Heart left ventricle (tissue), 16 donors: ENCODE measurements at regions of chr1 and their contacts with region 1.

Region 1: GRCh38 chr1:9449106-9449627 is 90.1 kb upstream of the SLC25A33 start:
- DNase-seq: peak in 4 of 5 donors; percentile 39 to 65 (median 52)
- ATAC-seq: peak; percentile 87 to 92 (median 90)
- H3K4me3 ChIP-seq: peak overlapping the region in 3 of 12 donors; percentile 3 to 10 (median 7)
- H3K27ac ChIP-seq: peak overlapping the region in 9 of 12 donors; percentile 13 to 71 (median 49)
- H3K4me1 ChIP-seq: peaks cover 0 to 26% (median 18%) of the 10 kb centered on the region in 12 donors
- H3K27me3 ChIP-seq: peaks cover 0 to 5% (median 0%) of the 10 kb centered on the region in 9 donors
- CTCF ChIP-seq: no peak
- POLR2A ChIP-seq: no peak

Region 2: GRCh38 chr1:9388335-9389180 is 60.6 kb before region 1 on chr1:
- intact Hi-C with region 1: loop called in 3 of 10 experiments (anchors 2 to 10 kb)
- DNase-seq: no peak
- ATAC-seq: peak in 1 of 4 donors; percentile 25
- H3K4me3 ChIP-seq: no peak overlapping the region
- H3K27ac ChIP-seq: peak overlapping the region in 1 of 12 donors; percentile 11
- H3K4me1 ChIP-seq: peaks cover 0 to 32% (median 19%) of the 10 kb centered on the region in 12 donors
- H3K27me3 ChIP-seq: no peaks in the 10 kb centered on the region
- CTCF ChIP-seq: no peak
- POLR2A ChIP-seq: no peak

Region 3: GRCh38 chr1:9413148-9413876 is 35.9 kb before region 1 on chr1:
- intact Hi-C with region 1: loop called in 1 of 10 experiments (anchors 5 kb)
- DNase-seq: peak; percentile 56 to 80 (median 74)
- ATAC-seq: peak; percentile 50 to 91 (median 88)
- H3K4me3 ChIP-seq: peak overlapping the region in 1 of 12 donors; percentile 24
- H3K27ac ChIP-seq: peak overlapping the region; percentile 66 to 94 (median 85)
- H3K4me1 ChIP-seq: peaks cover 6 to 30% (median 21%) of the 10 kb centered on the region in 12 donors
- H3K27me3 ChIP-seq: no peaks in the 10 kb centered on the region
- CTCF ChIP-seq: no peak
- POLR2A ChIP-seq: no peak

Region 4: GRCh38 chr1:9428601-9429341 is 20.4 kb before region 1 on chr1:
- intact Hi-C with region 1: loop called in 1 of 10 experiments (anchors 2 kb)
- DNase-seq: peak; percentile 98 to 99 (median 99)
- ATAC-seq: peak; percentile 96 to 99 (median 98)
- H3K4me3 ChIP-seq: peak overlapping the region; percentile 25 to 71 (median 61)
- H3K27ac ChIP-seq: peak overlapping the region; percentile 8 to 89 (median 78)
- H3K4me1 ChIP-seq: peaks cover 0 to 32% (median 9%) of the 10 kb centered on the region in 12 donors
- H3K27me3 ChIP-seq: no peaks in the 10 kb centered on the region
- CTCF ChIP-seq: peak in 5 of 12 donors; percentile 3 to 42 (median 26)
- POLR2A ChIP-seq: peak in 1 of 2 donors; percentile 68